ENCODE measurements at regions of chr12 and their contacts with region 1.

Region 1: DNA sequence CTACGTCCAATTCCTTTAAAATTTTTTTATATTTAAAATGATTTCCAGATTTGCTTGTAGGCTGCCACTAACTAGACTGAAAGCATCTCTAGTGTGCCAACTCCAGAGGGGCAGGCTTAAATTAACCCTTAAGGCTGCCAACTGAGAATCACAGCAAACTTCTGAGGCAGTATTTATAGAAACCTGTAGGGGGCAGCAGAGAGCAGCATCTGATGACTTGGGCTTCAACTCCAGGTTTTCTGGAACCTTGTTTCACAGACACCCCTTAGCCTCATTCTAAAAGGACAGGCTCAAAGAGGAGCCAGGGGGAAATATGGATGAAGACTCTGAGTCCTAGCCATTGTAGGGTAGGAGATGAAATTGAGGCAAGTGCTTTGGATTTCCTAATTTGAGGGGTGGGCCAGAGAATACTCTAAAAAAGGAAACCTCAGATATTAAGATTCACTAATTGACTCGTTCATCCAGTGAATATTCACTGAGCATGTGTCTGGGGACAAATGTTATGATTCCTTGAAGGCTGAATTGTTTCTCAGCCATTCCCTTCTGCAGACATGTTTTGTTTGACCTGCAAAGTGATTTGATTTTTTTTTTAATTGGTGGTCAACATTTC is 63.3 kb upstream of the HSPB8 start:
- DNase-seq: peak; percentile 38
- ATAC-seq: no peak; the same call in 2 of the 3 replicates
- H3K4me3 ChIP-seq: no peak overlapping the region
- H3K27ac ChIP-seq: no peak overlapping the region
- H3K4me1 ChIP-seq: no peaks in the 10 kb centered on the region
- H3K27me3 ChIP-seq: no peaks in the 10 kb centered on the region
- CTCF ChIP-seq: peak; percentile 67
- EP300 ChIP-seq: no peak
- POLR2A ChIP-seq: no peak
- RAD21 ChIP-seq: no peak

Region 2: GRCh38 chr12:119069147-119069642 is 46.2 kb before region 1 on chr12:
- CTCF ChIA-PET with region 1: no interaction called
- POLR2A ChIA-PET with region 1: no interaction called
- in situ Hi-C with region 1: no loop called
- intact Hi-C with region 1: no loop called
- DNase-seq: no peak
- ATAC-seq: no peak
- H3K4me3 ChIP-seq: no peak overlapping the region
- H3K27ac ChIP-seq: no peak overlapping the region
- H3K4me1 ChIP-seq: no peaks in the 10 kb centered on the region
- H3K27me3 ChIP-seq: peaks cover 0 to 3% of the 10 kb centered on the region in 2 experiments; a peak in 1 of 5 replicates
- CTCF ChIP-seq: no peak
- EP300 ChIP-seq: no peak
- POLR2A ChIP-seq: no peak
- RAD21 ChIP-seq: no peak

Region 3: DNA sequence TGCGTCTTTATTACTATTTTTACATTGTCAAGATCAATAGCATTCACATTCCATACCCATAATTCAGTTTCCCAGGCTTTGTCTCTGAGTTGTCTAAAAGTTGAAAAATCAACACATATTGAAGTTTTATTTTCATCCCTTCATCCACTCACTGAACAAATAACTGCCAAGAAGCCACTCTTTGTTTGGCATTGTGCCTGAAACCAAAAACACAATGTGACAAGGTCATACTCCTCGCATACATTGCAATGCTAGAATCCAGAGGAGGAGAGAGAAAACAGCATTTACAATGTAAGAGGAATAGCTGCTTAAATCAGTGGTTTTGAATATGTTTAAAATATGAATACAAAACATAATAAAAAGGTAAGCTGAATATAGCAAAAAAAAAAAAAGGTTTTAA is 290.9 kb after region 1 on chr12:
- CTCF ChIA-PET with region 1: no interaction called
- POLR2A ChIA-PET with region 1: no interaction called
- in situ Hi-C with region 1: loop called (anchors 10 kb)
- intact Hi-C with region 1: no loop called
- DNase-seq: no peak
- ATAC-seq: no peak
- H3K4me3 ChIP-seq: no peak overlapping the region
- H3K27ac ChIP-seq: no peak overlapping the region
- H3K4me1 ChIP-seq: no peaks in the 10 kb centered on the region
- H3K27me3 ChIP-seq: no peaks in the 10 kb centered on the region; a peak in 1 of 5 replicates
- CTCF ChIP-seq: no peak
- EP300 ChIP-seq: no peak
- POLR2A ChIP-seq: no peak
- RAD21 ChIP-seq: no peak

Region 4: GRCh38 chr12:119412811-119413794 is 297.7 kb after region 1 on chr12:
- CTCF ChIA-PET with region 1: interaction called, 12 read pairs
- POLR2A ChIA-PET with region 1: no interaction called
- in situ Hi-C with region 1: loop called (anchors 10 kb)
- intact Hi-C with region 1: loop called (anchors 2 kb)
- DNase-seq: peak; percentile 43
- ATAC-seq: peak; percentile 54
- H3K4me3 ChIP-seq: no peak overlapping the region
- H3K27ac ChIP-seq: no peak overlapping the region
- H3K4me1 ChIP-seq: no peaks in the 10 kb centered on the region
- H3K27me3 ChIP-seq: no peaks in the 10 kb centered on the region; a peak in 1 of 5 replicates
- CTCF ChIP-seq: peak; percentile 81
- EP300 ChIP-seq: no peak
- POLR2A ChIP-seq: no peak
- RAD21 ChIP-seq: peak; percentile 65